WTC11 (cell line): ENCODE measurements at regions of chr3 and their contacts with region 1.

Region 1: GRCh38 chr3:150210461-150211110 is 197.5 kb upstream of the TSC22D2 start:
- DNase-seq: no peak
- ATAC-seq: peak; percentile 91
- H3K4me3 Mint-ChIP-seq: no peak overlapping the region
- H3K27ac Mint-ChIP-seq: no peak overlapping the region
- H3K4me1 Mint-ChIP-seq: peaks cover 20% of the 10 kb centered on the region
- H3K27me3 Mint-ChIP-seq: no peaks in the 10 kb centered on the region; the same call in 1 of the 2 replicates
- CTCF ChIP-seq: no peak

Region 2: GRCh38 chr3:149936812-149937233 is 273.8 kb before region 1 on chr3:
- CTCF ChIA-PET with region 1: interaction called, 11 read pairs
- POLR2A ChIA-PET with region 1: no interaction called
- DNase-seq: peak; percentile 69
- ATAC-seq: peak; percentile 98
- H3K4me3 Mint-ChIP-seq: no peak overlapping the region
- H3K27ac Mint-ChIP-seq: peak overlapping the region; percentile 45; the same call in 1 of the 2 replicates
- H3K4me1 Mint-ChIP-seq: no peaks in the 10 kb centered on the region
- H3K27me3 Mint-ChIP-seq: no peaks in the 10 kb centered on the region
- CTCF ChIP-seq: 0 out of 2 replicates have a peak, but pooled peaks have one; percentile 33

Region 3: GRCh38 chr3:149967086-149967685 is 243.4 kb before region 1 on chr3:
- CTCF ChIA-PET with region 1: interaction called, 13 read pairs
- POLR2A ChIA-PET with region 1: no interaction called
- DNase-seq: no peak
- ATAC-seq: no peak
- H3K4me3 Mint-ChIP-seq: peak overlapping the region; percentile 91
- H3K27ac Mint-ChIP-seq: peak overlapping the region; percentile 76
- H3K4me1 Mint-ChIP-seq: peaks cover 54% of the 10 kb centered on the region
- H3K27me3 Mint-ChIP-seq: no peaks in the 10 kb centered on the region; the same call in 1 of the 2 replicates
- CTCF ChIP-seq: no peak

Region 4: DNA sequence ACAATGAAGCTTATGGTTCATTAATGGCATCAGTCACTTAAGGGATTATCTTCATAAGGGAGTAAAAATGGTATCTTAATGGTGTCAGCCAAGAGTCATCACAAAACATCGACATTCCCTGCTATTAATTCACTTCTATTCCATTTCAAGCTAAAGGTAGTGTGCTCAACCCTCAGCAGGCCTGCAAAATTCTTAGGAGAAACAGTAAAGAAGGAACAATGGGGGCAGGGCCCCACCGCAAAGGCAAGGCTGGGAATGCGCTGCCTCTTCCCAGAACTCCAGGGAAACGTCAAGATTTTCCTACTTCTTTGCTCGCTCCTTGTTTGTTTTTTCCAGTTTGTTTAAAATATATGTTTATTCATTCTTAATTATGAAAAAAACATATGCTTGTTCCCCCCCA is 10.2 kb after region 1 on chr3:
- CTCF ChIA-PET with region 1: interaction called, 15 read pairs
- POLR2A ChIA-PET with region 1: interaction called, 3 read pairs
- DNase-seq: no peak
- ATAC-seq: no peak
- H3K4me3 Mint-ChIP-seq: peak overlapping the region; percentile 77
- H3K27ac Mint-ChIP-seq: no peak overlapping the region
- H3K4me1 Mint-ChIP-seq: peaks cover 35% of the 10 kb centered on the region
- H3K27me3 Mint-ChIP-seq: peaks cover 12% of the 10 kb centered on the region
- CTCF ChIP-seq: no peak